ENCODE measurements at regions of chr12 and their contacts with region 1.

Region 1: DNA sequence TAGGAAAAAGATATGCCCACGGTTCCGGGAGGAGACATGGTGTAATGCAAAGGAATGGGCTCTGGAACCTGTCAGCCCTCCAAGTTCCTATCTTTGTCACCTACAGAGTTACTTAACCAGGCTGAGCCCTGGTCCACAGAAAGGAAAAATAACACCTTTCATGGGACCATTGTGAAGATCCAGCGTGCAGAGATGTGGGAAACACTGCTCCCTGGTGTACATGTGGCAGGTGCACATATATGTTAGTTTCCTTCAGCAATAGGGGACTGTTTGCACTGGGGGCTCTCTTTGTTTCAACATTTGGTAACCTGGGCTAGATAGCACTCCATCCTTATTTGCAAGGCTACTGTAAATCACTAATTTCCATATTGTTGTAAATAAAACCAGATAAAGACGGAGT is 72.3 kb downstream of the ANO2 start:
- DNase-seq: peak in 1 of 2 experiments; percentile 36
- H3K4me3 ChIP-seq: no peak overlapping the region
- H3K4me3 Mint-ChIP-seq: no peak overlapping the region
- H3K27ac Mint-ChIP-seq: no peak overlapping the region
- H3K4me1 ChIP-seq: no peaks in the 10 kb centered on the region
- H3K4me1 Mint-ChIP-seq: no peaks in the 10 kb centered on the region
- H3K27me3 ChIP-seq: peaks cover 2% of the 10 kb centered on the region
- H3K27me3 Mint-ChIP-seq: peaks cover 25% of the 10 kb centered on the region
- CTCF ChIP-seq: peak; percentile 69 to 75

Region 2: GRCh38 chr12:5803532-5803931 is 69.2 kb before region 1 on chr12:
- CTCF ChIA-PET with region 1: no interaction called
- POLR2A ChIA-PET with region 1: no interaction called
- intact Hi-C with region 1: loop called (anchors 2 kb)
- DNase-seq: no peak
- H3K4me3 ChIP-seq: no peak overlapping the region
- H3K4me3 Mint-ChIP-seq: no peak overlapping the region
- H3K27ac Mint-ChIP-seq: no peak overlapping the region
- H3K4me1 ChIP-seq: peaks cover 8% of the 10 kb centered on the region
- H3K4me1 Mint-ChIP-seq: no peaks in the 10 kb centered on the region
- H3K27me3 ChIP-seq: no peaks in the 10 kb centered on the region
- H3K27me3 Mint-ChIP-seq: peaks cover 21% of the 10 kb centered on the region
- CTCF ChIP-seq: no peak